AG04450 (cell line): ENCODE measurements at regions of chr2 and their contacts with region 1.

Region 1: DNA sequence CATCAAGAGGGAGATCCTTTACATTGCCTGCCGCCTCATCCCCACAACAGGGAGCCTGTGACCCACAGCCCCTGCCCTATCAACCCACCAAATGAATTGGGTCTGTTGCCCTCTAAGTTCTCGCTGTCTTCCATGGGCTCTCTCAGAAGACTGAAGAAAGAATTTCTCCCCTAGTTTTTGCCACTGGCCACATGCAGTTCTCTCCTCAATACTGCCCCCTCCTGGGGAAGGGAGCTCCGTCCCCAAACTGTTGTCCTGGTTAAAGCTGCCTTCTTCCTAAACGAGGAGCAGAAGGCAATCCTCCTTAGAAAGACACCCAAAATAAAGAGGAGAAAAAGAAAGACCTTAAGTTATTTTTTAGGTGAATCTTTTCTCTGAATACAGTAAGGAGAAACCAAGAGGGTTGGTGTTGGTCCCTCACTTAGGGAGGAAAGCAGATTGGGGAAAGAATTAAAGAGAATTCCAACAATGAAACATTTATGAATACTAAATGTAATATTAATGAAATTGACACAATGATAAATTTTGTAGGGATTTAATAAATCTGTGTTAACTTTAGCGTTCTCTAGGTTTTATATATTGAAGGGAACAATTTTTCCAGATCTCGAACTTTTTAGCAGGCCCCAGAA is 31.1 kb upstream of the SATB2 start:
- DNase-seq: peak; percentile 26
- H3K4me3 ChIP-seq: no peak overlapping the region
- H3K27ac ChIP-seq: no peak overlapping the region
- H3K27me3 ChIP-seq: no peaks in the 10 kb centered on the region
- CTCF ChIP-seq: peak; percentile 93

Region 2: GRCh38 chr2:198309673-198310280 is 1179.1 kb before region 1 on chr2:
- CTCF ChIA-PET with region 1: interaction called, 143 read pairs
- POLR2A ChIA-PET with region 1: no interaction called
- DNase-seq: peak; percentile 10
- H3K4me3 ChIP-seq: no peak overlapping the region
- H3K27ac ChIP-seq: no peak overlapping the region
- H3K27me3 ChIP-seq: no peaks in the 10 kb centered on the region
- CTCF ChIP-seq: peak; percentile 91

Region 3: GRCh38 chr2:198657512-198658121 is 831.3 kb before region 1 on chr2:
- CTCF ChIA-PET with region 1: interaction called, 50 read pairs
- POLR2A ChIA-PET with region 1: no interaction called
- DNase-seq: no peak
- H3K4me3 ChIP-seq: no peak overlapping the region
- H3K27ac ChIP-seq: no peak overlapping the region
- H3K27me3 ChIP-seq: no peaks in the 10 kb centered on the region
- CTCF ChIP-seq: peak; percentile 65

Region 4: DNA sequence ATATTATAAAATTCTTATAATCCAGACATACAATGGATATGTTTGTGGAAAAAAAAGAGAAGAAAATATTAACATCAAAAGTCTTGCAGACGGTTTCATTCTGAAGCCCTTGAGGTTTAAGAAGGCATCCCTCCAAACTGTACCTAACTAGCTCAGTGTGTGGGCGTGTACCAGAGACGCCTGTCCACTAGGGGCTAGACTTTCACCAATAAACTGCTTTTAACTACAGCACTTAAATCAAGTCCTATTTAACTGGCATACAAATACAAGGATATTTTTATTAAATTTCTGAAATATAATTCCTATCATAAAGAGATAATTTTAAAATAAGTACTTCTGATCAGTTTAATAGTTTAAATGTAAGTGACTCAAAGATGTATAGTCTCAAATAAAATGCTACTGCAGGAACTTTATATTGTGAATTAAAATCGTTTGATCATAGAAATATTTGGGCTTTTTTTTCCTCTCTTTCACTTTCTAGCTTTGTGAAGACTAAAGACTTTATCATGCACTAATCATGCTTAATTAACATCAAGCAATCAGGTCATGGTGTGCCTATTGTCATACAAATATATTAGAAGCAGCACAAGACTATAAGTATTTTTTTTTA is 468.9 kb before region 1 on chr2:
- CTCF ChIA-PET with region 1: interaction called, 17 read pairs
- POLR2A ChIA-PET with region 1: no interaction called
- DNase-seq: peak; percentile 4
- H3K4me3 ChIP-seq: no peak overlapping the region
- H3K27ac ChIP-seq: no peak overlapping the region
- H3K27me3 ChIP-seq: no peaks in the 10 kb centered on the region
- CTCF ChIP-seq: peak; percentile 75

Region 5: GRCh38 chr2:199509403-199509802 is 20.5 kb after region 1 on chr2:
- CTCF ChIA-PET with region 1: interaction called, 12 read pairs
- POLR2A ChIA-PET with region 1: no interaction called
- DNase-seq: no peak
- H3K4me3 ChIP-seq: no peak overlapping the region
- H3K27ac ChIP-seq: no peak overlapping the region
- H3K27me3 ChIP-seq: no peaks in the 10 kb centered on the region
- CTCF ChIP-seq: no peak